Ascending aorta (tissue), 2 donors: ENCODE measurements at regions of chr14 and their contacts with region 1.

Region 1: GRCh38 chr14:36553656-36554260 is 28.7 kb downstream of the NKX2-8 start:
- DNase-seq: no peak
- H3K4me3 ChIP-seq: no peak overlapping the region
- H3K27ac ChIP-seq: no peak overlapping the region
- H3K4me1 ChIP-seq: no peaks in the 10 kb centered on the region
- H3K27me3 ChIP-seq: no peaks in the 10 kb centered on the region
- CTCF ChIP-seq: peak in 2 of 3 experiments; percentile 47 to 62

Region 2: GRCh38 chr14:36580856-36581831 is 27.4 kb after region 1 on chr14:
- intact Hi-C with region 1: no loop called
- DNase-seq: no peak
- H3K4me3 ChIP-seq: peak overlapping the region; percentile 45 to 65
- H3K27ac ChIP-seq: no peak overlapping the region
- H3K4me1 ChIP-seq: peaks cover 5 to 13% of the 10 kb centered on the region in 2 donors
- H3K27me3 ChIP-seq: peaks cover 6% of the 10 kb centered on the region
- CTCF ChIP-seq: no peak

Region 3: DNA sequence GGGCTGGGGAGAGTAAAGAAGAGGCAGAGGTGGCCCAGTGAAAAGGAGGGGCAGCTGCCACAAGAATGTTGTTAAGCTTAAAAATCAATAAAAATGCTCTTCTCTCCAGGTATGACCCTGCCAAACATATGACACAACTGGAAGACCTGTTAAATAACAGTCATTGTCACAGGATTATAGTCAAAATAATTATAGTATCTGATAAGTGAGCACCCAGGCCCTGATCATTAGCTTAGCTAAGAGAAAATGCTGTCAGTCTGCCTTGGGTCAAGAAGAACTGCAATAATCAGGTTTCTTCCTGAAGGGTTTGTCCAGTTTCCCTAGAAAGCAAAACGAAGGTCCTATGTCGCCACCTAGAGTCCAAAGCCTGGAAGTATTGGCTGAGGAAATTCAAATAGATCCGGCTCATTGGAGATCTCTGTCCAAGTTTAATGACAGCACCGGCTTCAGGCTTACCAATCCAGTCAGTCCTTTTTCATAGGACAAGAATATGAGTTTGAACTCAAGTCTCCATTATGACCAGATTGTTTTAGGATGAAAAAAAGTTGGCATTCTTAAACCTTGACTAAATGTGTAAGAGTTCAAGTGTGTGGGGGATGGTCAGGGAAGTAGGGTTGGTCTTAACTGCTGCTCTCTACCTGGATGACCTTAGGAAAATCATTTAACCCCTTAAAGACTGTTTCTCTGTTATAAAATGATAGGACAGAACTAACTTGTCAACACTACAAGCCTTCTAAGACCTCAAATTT is 51.2 kb after region 1 on chr14:
- intact Hi-C with region 1: loop called (anchors 1 kb)
- DNase-seq: peak in 1 of 2 donors; percentile 65
- H3K4me3 ChIP-seq: no peak overlapping the region
- H3K27ac ChIP-seq: no peak overlapping the region
- H3K4me1 ChIP-seq: no peaks in the 10 kb centered on the region
- H3K27me3 ChIP-seq: no peaks in the 10 kb centered on the region
- CTCF ChIP-seq: peak; percentile 35 to 77 (median 61)

Region 4: DNA sequence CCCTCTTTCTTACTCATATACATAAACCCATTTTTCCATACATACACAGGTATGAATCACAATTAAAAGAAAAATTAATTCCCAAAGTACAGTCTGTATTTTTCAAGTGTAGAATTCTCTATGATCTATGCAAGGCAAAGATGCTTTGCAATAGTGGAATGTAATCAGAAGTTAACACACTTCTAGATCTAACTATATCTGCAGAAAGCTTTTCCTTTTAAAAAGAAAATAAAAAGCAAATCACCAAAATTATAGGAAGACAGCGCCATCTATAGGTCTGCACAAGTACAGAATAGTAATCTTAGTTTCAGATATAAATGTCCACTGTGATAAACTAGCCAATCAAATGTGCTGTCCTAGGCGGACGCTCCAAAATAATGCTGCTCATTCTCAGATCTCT is 596.7 kb after region 1 on chr14:
- intact Hi-C with region 1: loop called (anchors 2 kb)
- DNase-seq: no peak
- H3K4me3 ChIP-seq: no peak overlapping the region
- H3K27ac ChIP-seq: no peak overlapping the region
- H3K4me1 ChIP-seq: no peaks in the 10 kb centered on the region
- H3K27me3 ChIP-seq: no peaks in the 10 kb centered on the region
- CTCF ChIP-seq: peak in 2 of 3 experiments; percentile 54 to 74